ENCODE measurements at regions of chr14 and their contacts with region 1.

Region 1: GRCh38 chr14:64891839-64892375 is 12.2 kb upstream of the SPTB start:
- DNase-seq: peak; percentile 45
- H3K4me3 Mint-ChIP-seq: no peak overlapping the region
- H3K27ac Mint-ChIP-seq: no peak overlapping the region
- H3K4me1 Mint-ChIP-seq: no peaks in the 10 kb centered on the region
- H3K27me3 Mint-ChIP-seq: peaks cover 24% of the 10 kb centered on the region

Region 2: DNA sequence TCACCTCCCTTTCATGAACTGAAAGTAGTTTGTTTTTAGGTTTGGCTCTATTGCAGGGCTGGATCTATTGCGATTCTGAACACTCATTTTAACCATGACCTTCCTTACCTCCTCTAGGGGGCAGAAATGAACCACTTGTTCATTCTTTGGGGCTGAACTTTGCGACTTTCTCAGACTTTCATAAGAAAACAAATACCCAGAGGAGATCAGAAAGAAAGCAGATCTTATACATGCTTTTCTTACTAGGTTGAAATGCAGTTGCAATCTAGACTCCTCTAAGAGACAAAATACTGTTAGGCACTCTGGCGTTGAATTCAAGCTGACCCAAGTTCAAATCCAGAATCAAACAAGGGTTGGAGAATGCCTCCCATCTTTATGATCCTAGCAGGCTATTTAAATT is 220.3 kb before region 1 on chr14:
- CTCF ChIA-PET with region 1: interaction called, 39 read pairs
- DNase-seq: no peak
- H3K4me3 Mint-ChIP-seq: no peak overlapping the region
- H3K27ac Mint-ChIP-seq: no peak overlapping the region
- H3K4me1 Mint-ChIP-seq: peaks cover 41% of the 10 kb centered on the region
- H3K27me3 Mint-ChIP-seq: peaks cover 38% of the 10 kb centered on the region

Region 3: GRCh38 chr14:64764641-64765520 is 127.0 kb before region 1 on chr14:
- CTCF ChIA-PET with region 1: interaction called, 29 read pairs
- DNase-seq: peak; percentile 78
- H3K4me3 Mint-ChIP-seq: peak overlapping the region; percentile 29
- H3K27ac Mint-ChIP-seq: no peak overlapping the region
- H3K4me1 Mint-ChIP-seq: peaks cover 44% of the 10 kb centered on the region
- H3K27me3 Mint-ChIP-seq: peaks cover 49% of the 10 kb centered on the region

Region 4: DNA sequence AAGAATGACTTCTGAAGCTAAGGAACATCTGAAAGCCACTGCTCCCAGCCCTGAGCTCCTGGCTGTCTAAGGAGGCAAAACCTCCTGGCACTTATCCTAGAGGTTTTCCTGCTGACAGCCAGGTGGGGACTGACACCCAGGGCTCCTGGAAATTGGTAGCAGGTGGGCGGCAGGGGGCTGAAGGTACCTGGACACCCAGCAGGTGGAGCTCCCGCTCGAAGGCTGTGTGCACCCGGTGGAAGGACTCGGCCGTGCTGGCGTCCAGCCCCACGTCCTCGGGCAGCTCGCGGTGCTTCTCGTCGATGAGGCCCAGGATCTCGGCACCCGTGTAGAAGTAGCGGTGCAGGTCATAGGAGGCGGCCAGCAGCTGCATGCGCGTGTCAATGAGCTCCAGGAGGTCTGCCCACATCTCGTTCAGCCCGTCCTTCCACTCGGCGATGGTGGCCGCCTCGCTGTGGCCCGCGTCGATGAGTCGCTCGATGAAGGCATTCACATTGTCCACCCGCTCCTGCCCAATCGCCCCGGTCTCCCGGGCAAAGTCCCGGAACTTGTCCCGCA is 119.4 kb before region 1 on chr14:
- CTCF ChIA-PET with region 1: interaction called, 15 read pairs
- DNase-seq: no peak
- H3K4me3 Mint-ChIP-seq: no peak overlapping the region
- H3K27ac Mint-ChIP-seq: no peak overlapping the region
- H3K4me1 Mint-ChIP-seq: peaks cover 20% of the 10 kb centered on the region
- H3K27me3 Mint-ChIP-seq: peaks cover 27% of the 10 kb centered on the region

Region 5: DNA sequence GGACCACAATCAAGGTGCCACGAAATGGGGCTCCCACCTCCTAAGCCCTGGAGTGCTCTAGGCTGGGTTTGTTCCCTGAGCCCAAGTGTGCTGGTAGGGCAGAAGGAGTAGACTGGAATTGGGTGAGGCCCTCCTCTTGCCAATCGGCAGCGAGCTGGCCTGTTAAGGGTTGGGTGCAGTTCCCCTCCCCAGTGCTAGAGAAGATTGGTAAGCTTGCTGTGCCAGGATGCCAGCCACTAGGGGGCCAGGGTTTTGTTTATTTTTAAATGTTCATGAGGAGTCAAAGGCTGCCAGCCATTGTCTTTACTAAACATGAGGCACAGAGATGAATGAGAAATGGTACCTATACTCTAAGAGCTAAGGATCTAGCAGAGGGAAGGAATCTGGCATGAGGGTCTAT is 91.9 kb before region 1 on chr14:
- CTCF ChIA-PET with region 1: interaction called, 10 read pairs
- DNase-seq: peak; percentile 43
- H3K4me3 Mint-ChIP-seq: no peak overlapping the region
- H3K27ac Mint-ChIP-seq: no peak overlapping the region
- H3K4me1 Mint-ChIP-seq: no peaks in the 10 kb centered on the region
- H3K27me3 Mint-ChIP-seq: peaks cover 29% of the 10 kb centered on the region

Region 6: DNA sequence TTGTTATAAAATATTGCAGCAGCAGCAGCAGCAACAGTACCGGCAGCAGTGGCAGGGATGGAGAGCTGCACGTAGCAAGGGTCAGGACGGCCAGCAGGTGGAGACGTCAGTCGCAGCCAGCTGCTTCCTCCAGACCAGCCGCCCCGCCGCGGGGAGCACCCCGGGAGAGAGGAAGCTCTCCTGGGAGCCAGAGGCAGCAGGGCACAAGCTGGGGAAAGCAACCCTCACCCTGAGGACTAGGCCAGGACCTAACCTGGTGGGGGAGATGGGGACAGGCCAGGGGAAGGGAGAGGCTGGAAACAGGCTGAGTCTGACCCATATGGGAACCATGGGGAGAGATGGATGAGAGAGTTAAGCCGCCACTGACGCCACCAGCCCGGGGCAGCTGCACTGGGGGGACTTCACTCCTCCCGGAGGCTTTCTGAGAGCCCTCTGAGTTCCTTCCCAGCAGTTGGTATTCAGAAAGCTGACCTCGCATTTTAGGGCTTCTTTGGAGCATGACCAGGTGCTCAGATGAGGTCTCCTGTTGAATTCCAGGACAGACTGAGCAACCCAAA is 68.5 kb before region 1 on chr14:
- CTCF ChIA-PET with region 1: interaction called, 70 read pairs
- DNase-seq: peak; percentile 81
- H3K4me3 Mint-ChIP-seq: no peak overlapping the region
- H3K27ac Mint-ChIP-seq: no peak overlapping the region
- H3K4me1 Mint-ChIP-seq: peaks cover 4% of the 10 kb centered on the region
- H3K27me3 Mint-ChIP-seq: peaks cover 80% of the 10 kb centered on the region

Region 7: GRCh38 chr14:64841121-64841651 is 50.7 kb before region 1 on chr14:
- CTCF ChIA-PET with region 1: no interaction called
- DNase-seq: no peak
- H3K4me3 Mint-ChIP-seq: no peak overlapping the region
- H3K27ac Mint-ChIP-seq: no peak overlapping the region
- H3K4me1 Mint-ChIP-seq: no peaks in the 10 kb centered on the region
- H3K27me3 Mint-ChIP-seq: peaks cover 54% of the 10 kb centered on the region

Region 8: GRCh38 chr14:64880221-64881121 is 11.4 kb before region 1 on chr14:
- CTCF ChIA-PET with region 1: interaction called, 40 read pairs
- DNase-seq: peak; percentile 76
- H3K4me3 Mint-ChIP-seq: peak overlapping the region; percentile 79
- H3K27ac Mint-ChIP-seq: no peak overlapping the region
- H3K4me1 Mint-ChIP-seq: peaks cover 17% of the 10 kb centered on the region
- H3K27me3 Mint-ChIP-seq: peaks cover 89% of the 10 kb centered on the region

Measured in activated naive CD4-positive, alpha-beta T cell treated with anti-CD3 and anti-CD28 coated beads, Interleukin-2, amount 10 ng/mL, durations not matched to agents 7 days and 5 days (primary cell).